ENCODE measurements at regions of chr9 and their contacts with region 1.

Region 1: GRCh38 chr9:120928483-120929228 is 2.1 kb upstream of the TRAF1 start:
- DNase-seq: peak; percentile 86
- H3K4me3 Mint-ChIP-seq: peak overlapping the region; percentile 93
- H3K27ac Mint-ChIP-seq: peak overlapping the region; percentile 100
- H3K4me1 Mint-ChIP-seq: peaks cover 79% of the 10 kb centered on the region
- H3K27me3 Mint-ChIP-seq: no peaks in the 10 kb centered on the region

Region 2: DNA sequence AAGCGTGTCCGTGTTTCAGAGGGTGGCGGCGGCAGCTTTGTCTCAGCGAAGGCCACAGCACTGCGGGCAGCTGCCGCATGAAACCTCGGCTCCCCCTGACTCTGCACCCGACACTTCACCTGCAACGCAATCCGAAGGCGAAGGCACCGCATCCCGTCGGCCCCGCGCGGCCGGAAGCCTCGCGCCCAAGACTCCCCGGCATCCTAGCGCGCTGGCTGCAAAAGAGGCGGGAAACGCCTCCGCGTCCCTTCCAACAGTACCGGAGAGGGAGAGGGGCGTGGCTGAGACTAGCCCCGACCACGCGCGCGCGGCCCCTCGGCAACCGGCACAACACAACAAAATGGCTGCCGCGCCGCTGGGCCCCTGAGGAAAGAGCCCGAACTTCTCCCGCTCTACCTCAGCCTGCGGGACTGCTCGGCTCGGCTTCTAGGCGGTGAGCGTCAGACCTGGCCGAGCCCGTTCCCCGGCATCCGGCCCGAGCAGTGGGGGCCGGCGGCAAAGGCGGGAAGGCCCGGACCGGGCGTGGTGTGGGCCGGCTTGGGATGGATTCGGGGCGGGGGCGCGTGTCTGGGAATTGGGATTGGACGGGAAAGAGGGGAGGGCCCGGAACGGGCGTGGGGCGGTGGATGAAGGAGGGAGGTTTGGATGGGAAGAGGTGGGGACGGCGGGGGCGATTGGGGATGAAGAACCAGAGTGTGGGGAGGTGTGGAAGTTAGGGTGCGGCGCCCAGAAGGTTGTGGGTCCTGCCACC is 146.2 kb after region 1 on chr9 and contains the start of gene CNTRL:
- CTCF ChIA-PET with region 1: interaction called, 3 read pairs
- POLR2A ChIA-PET with region 1: interaction called, 11 read pairs
- DNase-seq: peak; percentile 93
- H3K4me3 Mint-ChIP-seq: peak within 1 kb of the TSS; percentile 96
- H3K27ac Mint-ChIP-seq: peak within 1 kb of the TSS; percentile 91
- H3K4me1 Mint-ChIP-seq: peaks cover 53% of the 10 kb centered on the region
- H3K27me3 Mint-ChIP-seq: no peaks in the 10 kb centered on the region
- total RNA-seq, gene CNTRL: 84.1 to 86.9 TPM